ENCODE measurements at regions of chr4 and their contacts with region 1.

Region 1: GRCh38 chr4:164731827-164732474 is 22.0 kb upstream of the SMIM31 start:
- DNase-seq: peak; percentile 72
- H3K4me3 Mint-ChIP-seq: no peak overlapping the region
- H3K27ac Mint-ChIP-seq: no peak overlapping the region
- H3K4me1 Mint-ChIP-seq: peaks cover 6% of the 10 kb centered on the region
- H3K27me3 Mint-ChIP-seq: peaks cover 9% of the 10 kb centered on the region

Region 2: GRCh38 chr4:163755013-163755412 is 976.9 kb before region 1 on chr4:
- CTCF ChIA-PET with region 1: interaction called, 3 read pairs
- intact Hi-C with region 1: loop called (anchors 10 kb)
- DNase-seq: no peak
- H3K4me3 Mint-ChIP-seq: no peak overlapping the region
- H3K27ac Mint-ChIP-seq: no peak overlapping the region
- H3K4me1 Mint-ChIP-seq: peaks cover 2% of the 10 kb centered on the region
- H3K27me3 Mint-ChIP-seq: no peaks in the 10 kb centered on the region

Region 3: DNA sequence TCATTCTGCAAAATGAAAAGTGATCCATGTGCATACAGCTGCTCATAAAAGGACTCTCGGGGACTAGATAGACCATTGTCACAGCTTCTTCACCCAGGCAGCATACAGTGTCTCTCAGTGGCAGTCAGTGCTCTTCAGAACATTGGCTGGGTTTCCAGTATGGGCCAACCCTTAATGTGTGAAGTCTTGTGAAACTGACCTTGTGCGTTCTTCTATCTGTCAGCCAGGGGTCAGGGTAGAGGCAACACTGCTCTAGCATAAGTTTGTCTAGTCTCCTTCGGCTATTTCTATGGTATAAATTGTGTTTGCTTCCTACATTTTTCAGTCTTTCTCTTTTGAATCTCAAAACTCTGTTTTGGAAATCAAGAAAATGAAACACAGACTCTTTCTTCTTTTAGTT is 15.1 kb before region 1 on chr4:
- CTCF ChIA-PET with region 1: interaction called, 10 read pairs
- intact Hi-C with region 1: no loop called
- DNase-seq: no peak
- H3K4me3 Mint-ChIP-seq: no peak overlapping the region
- H3K27ac Mint-ChIP-seq: no peak overlapping the region
- H3K4me1 Mint-ChIP-seq: no peaks in the 10 kb centered on the region
- H3K27me3 Mint-ChIP-seq: peaks cover 6% of the 10 kb centered on the region

Region 4: DNA sequence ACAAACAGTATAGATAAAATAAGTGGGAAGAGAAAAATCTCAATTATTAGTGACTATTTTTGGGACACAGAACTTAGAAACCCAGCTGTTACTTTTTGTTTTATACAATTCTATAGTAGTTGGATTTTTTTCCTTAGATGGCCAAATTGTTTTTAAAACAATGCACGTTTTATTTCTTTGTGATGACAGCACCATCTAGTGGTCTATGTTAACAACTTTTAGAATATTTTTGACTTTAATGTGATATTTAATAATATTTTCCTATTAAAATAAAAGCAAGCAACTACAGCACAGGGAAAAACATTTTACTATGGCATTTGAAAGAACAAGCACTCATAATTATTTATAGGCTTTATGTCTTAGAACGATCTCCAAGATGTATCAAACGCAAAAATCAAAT is 16.4 kb after region 1 on chr4:
- CTCF ChIA-PET with region 1: interaction called, 10 read pairs
- intact Hi-C with region 1: no loop called
- DNase-seq: no peak
- H3K4me3 Mint-ChIP-seq: no peak overlapping the region
- H3K27ac Mint-ChIP-seq: no peak overlapping the region
- H3K4me1 Mint-ChIP-seq: no peaks in the 10 kb centered on the region
- H3K27me3 Mint-ChIP-seq: peaks cover 9% of the 10 kb centered on the region